ENCODE measurements at regions of chr10 and their contacts with region 1.

Region 1: GRCh38 chr10:74924251-74924951 is 98.0 kb downstream of the KAT6B start:
- DNase-seq: no peak
- ATAC-seq: peak in 7 of 8 donors; percentile 50 to 82 (median 70)
- H3K4me3 ChIP-seq: no peak overlapping the region
- H3K27ac ChIP-seq: peak overlapping the region; percentile 11 to 62 (median 42)
- H3K4me1 ChIP-seq: peaks cover 8 to 88% (median 69%) of the 10 kb centered on the region in 9 donors
- H3K27me3 ChIP-seq: no peaks in the 10 kb centered on the region
- CTCF ChIP-seq: no peak

Region 2: DNA sequence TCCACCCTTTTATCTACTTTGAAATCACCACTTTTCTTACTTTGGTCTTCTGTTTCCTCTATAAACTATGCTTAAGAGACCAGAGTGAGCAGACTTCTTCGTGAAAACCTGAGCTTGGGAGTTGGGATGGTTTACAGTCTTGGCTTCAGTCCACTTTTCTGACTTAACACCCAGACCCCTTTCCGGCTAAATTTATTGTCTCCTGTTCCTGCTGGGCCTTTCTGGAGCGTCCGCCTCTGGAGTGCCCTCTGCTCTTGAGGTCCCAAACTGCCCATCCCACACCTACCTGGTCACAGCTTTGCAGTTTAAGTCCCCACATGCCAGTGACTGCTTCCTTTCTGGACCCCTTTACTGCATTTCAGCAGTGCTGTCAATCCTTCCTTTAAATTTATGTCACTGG is 17.8 kb before region 1 on chr10:
- intact Hi-C with region 1: loop called in 1 of 10 experiments (anchors 2 kb)
- DNase-seq: no peak
- ATAC-seq: no peak
- H3K4me3 ChIP-seq: no peak overlapping the region
- H3K27ac ChIP-seq: no peak overlapping the region
- H3K4me1 ChIP-seq: peaks cover 4 to 56% (median 19%) of the 10 kb centered on the region in 9 donors
- H3K27me3 ChIP-seq: no peaks in the 10 kb centered on the region
- CTCF ChIP-seq: no peak